ENCODE measurements at regions of chr16 and their contacts with region 1.

Region 1: DNA sequence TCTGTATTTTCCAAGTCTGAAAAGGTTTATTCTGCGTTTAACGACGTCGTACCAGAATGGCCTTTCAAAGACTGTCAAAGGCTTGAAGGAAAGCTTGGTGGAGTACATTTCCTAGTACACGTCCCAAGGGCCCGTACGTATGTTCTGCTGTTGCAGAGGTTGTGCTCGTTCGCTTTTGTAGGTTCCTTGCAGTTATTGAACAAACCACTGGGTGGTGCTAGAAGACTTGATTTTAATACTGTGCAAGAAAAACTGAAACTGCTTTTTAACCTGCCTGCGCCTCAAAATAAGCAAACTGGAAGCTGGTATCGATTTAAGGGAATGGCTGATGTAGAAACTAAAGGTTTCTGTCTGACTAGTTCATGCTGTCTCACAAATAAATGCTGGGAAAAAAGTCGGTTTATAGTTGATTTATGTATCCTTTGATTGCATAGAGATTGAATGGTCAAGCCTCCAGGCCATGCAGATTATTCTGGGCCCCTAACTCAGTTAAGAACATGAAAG is 54.6 kb downstream of the USP10 start:
- DNase-seq: peak; percentile 53 to 61
- ATAC-seq: peak; percentile 80

Region 2: GRCh38 chr16:84952335-84953189 is 198.2 kb after region 1 on chr16:
- intact Hi-C with region 1: loop called in 1 of 2 experiments (anchors 5 kb)
- DNase-seq: peak; percentile 73 to 78
- ATAC-seq: peak; percentile 94

Region 3: GRCh38 chr16:84970447-84971127 is 216.2 kb after region 1 on chr16:
- intact Hi-C with region 1: loop called (anchors 5 to 10 kb)
- DNase-seq: peak; percentile 65 to 81
- ATAC-seq: peak; percentile 84